Activated T-helper 2 cell treated with anti-CD3 and anti-CD28 coated beads, Interferon-gamma antibody, Interleukin-2, Interleukin-4, amounts not matched to agents 10 μg/mL and 5 μg/mL and 100 μg/mL, durations not matched to agents 14 hours and 24 hours and 36 hours (primary cell): ENCODE measurements at regions of chr6 and their contacts with region 1.

Region 1: DNA sequence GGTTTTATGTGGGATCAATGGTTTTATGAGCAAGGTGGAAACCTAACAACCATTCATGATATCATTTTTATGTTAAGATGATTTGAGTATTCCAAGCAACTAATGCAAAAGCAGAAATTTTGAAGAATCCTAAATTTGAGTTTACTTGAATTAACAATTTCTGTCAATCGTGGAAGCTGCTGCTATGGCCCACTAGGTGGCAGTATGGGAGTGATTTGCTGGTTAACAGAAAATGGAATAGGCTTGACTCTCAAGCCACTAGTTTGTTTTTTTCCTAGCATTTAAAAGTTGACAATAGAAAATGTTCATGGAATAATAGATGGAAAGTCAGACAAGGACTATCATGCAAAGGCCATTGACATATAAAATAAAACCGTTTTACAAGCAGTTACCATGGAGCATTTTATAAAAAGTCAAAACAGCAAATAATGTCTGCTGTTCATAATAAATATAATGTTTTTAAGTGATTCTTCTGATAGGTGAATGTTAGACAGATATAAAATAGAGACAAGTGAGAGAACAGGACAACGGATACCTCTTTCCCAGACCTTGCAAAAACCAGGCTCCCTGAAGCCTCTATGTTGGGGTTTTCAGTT is 43.0 kb upstream of the TMEM200A start:
- DNase-seq: peak; percentile 15
- H3K4me3 Mint-ChIP-seq: no peak overlapping the region
- H3K27ac Mint-ChIP-seq: no peak overlapping the region
- H3K4me1 Mint-ChIP-seq: peaks cover 2% of the 10 kb centered on the region
- H3K27me3 Mint-ChIP-seq: peaks cover 22% of the 10 kb centered on the region

Region 2: DNA sequence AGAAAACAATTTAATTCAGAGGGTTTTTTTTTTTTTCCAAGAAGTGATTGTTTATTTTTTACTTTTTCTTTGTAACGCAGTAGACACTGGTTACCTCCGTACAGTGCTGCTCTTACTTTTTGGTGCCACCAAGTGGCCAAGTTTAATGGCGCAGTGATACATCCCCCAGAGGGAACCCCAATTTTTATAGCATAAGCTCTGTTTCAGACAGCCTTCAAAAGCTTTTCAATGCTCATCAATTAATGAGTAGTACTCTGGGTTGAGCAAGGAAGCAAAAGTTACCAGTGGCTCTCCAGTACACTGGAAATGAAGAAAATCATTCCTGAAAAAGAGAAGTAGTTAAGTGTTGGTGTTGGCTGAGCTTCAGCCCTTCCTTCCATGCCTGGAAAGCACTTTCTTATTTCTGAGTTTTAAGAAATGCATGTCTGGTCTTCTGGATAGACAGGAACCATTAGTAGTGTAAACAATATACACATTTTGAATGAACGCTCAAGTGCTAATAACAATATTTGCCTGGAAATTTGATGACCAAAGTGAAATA is 375.3 kb after region 1 on chr6:
- intact Hi-C with region 1: loop called (anchors 1 kb)
- DNase-seq: peak; percentile 51
- H3K4me3 Mint-ChIP-seq: no peak overlapping the region
- H3K27ac Mint-ChIP-seq: peak overlapping the region; percentile 29
- H3K4me1 Mint-ChIP-seq: peaks cover 18% of the 10 kb centered on the region
- H3K27me3 Mint-ChIP-seq: no peaks in the 10 kb centered on the region

Region 3: GRCh38 chr6:130760006-130760405 is 437.2 kb after region 1 on chr6:
- intact Hi-C with region 1: loop called (anchors 1 kb)
- DNase-seq: no peak
- H3K4me3 Mint-ChIP-seq: no peak overlapping the region
- H3K27ac Mint-ChIP-seq: no peak overlapping the region
- H3K4me1 Mint-ChIP-seq: peaks cover 2% of the 10 kb centered on the region
- H3K27me3 Mint-ChIP-seq: peaks cover 17% of the 10 kb centered on the region

Region 4: GRCh38 chr6:130843575-130844320 is 521.0 kb after region 1 on chr6:
- intact Hi-C with region 1: loop called (anchors 1 kb)
- DNase-seq: no peak
- H3K4me3 Mint-ChIP-seq: no peak overlapping the region
- H3K27ac Mint-ChIP-seq: no peak overlapping the region
- H3K4me1 Mint-ChIP-seq: peaks cover 2% of the 10 kb centered on the region
- H3K27me3 Mint-ChIP-seq: no peaks in the 10 kb centered on the region

Region 5: GRCh38 chr6:130872250-130873095 is 549.7 kb after region 1 on chr6:
- intact Hi-C with region 1: loop called (anchors 2 kb)
- DNase-seq: peak; percentile 43
- H3K4me3 Mint-ChIP-seq: no peak overlapping the region
- H3K27ac Mint-ChIP-seq: no peak overlapping the region
- H3K4me1 Mint-ChIP-seq: peaks cover 3% of the 10 kb centered on the region
- H3K27me3 Mint-ChIP-seq: no peaks in the 10 kb centered on the region